Activated CD4-positive, alpha-beta memory T cell treated with anti-CD3 and anti-CD28 coated beads for 36 hours (primary cell): ENCODE measurements at regions of chr16 and their contacts with region 1.

Region 1: DNA sequence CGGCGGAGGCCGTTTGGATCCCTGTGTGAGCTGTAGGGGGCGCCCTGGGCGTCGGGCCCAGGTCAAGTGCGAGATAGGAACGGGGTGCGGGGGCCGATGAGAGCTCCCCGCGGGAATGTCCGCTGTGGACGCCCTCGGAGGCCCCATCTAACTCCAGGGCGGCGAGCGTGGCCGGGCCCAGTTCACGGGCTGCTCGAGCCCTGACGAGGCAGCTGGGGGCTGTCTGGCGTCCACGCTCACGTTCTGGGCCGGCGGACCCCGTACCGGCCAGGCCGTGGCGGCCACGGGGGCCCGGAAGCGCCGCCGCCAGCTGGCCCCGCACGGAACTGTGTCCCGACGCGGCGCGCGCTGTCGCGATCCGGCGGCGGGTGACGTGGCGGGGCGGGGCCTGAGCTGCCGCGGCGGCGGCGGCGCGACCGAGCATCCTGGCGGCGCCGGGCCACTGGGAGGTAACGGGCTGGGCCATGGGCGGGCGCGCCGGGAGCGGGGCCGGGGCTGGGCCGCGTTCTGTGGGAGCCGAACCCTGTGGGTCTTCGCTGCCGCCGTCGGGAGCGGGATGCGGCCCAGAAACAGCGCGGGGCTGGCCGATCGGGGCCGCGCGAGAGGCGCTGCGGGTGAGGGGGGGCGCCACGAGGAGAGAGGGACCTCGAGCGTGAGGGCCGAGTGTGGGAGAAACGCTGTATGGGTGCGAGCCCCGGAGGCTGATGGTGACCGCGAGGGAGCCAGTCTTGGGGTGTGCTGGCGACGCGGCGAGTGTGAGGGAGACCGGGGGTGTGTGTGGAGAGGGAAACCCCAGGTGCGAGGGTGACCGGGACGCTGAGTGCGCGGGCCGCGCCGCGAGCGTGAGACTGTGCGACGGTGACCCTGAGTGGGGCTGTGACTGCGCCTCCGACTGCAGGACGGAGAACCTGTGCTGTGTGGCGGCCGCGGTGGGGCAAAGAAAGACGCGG is at the start of gene SLC7A6:
- DNase-seq: peak; percentile 92
- H3K4me3 Mint-ChIP-seq: peak within 1 kb of the TSS; percentile 96
- H3K27ac Mint-ChIP-seq: peak within 1 kb of the TSS; percentile 95
- H3K4me1 Mint-ChIP-seq: peaks cover 43% of the 10 kb centered on the region
- H3K27me3 Mint-ChIP-seq: no peaks in the 10 kb centered on the region
- total RNA-seq, gene SLC7A6: 62.8 to 63.8 TPM

Region 2: DNA sequence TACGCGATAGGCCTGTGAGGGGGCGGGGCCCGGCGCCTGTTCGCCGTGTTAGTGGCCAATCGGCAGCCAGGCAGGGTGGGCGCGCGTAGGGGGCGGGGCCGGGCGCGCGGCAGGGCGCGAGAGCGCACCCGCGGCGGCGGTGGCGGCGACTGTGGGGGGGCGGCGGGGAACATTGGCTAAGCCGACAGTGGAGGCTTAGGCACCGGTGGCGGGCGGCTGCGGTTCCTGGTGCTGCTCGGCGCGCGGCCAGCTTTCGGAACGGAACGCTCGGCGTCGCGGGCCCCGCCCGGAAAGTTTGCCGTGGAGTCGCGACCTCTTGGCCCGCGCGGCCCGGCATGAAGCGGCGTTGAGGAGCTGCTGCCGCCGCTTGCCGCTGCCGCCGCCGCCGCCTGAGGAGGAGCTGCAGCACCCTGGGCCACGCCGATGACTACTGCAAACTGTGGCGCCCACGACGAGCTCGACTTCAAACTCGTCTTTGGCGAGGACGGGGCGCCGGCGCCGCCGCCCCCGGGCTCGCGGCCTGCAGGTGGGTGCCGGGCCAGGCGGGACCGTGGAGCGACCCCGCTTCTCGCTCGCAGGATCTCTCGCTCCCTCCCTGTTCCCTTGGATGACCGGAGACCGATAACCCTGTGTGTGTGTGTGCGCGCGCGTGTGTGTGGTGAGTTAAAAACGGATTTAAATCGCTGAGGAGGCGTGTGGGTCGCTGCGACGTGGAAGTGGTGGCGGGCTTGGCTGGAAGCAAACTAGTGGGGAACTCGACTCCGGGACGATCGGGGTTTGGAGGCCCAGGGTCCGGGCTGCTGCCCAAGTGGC is 178.9 kb before region 1 on chr16 and contains the start of gene NFATC3:
- CTCF ChIA-PET with region 1: interaction called, 6 read pairs
- POLR2A ChIA-PET with region 1: interaction called, 10 read pairs
- intact Hi-C with region 1: no loop called
- DNase-seq: peak; percentile 99
- H3K4me3 Mint-ChIP-seq: peak within 1 kb of the TSS; percentile 86
- H3K27ac Mint-ChIP-seq: peak within 1 kb of the TSS; percentile 98
- H3K4me1 Mint-ChIP-seq: peaks cover 62% of the 10 kb centered on the region
- H3K27me3 Mint-ChIP-seq: no peaks in the 10 kb centered on the region
- total RNA-seq, gene NFATC3: 83.4 to 85.2 TPM

Region 3: DNA sequence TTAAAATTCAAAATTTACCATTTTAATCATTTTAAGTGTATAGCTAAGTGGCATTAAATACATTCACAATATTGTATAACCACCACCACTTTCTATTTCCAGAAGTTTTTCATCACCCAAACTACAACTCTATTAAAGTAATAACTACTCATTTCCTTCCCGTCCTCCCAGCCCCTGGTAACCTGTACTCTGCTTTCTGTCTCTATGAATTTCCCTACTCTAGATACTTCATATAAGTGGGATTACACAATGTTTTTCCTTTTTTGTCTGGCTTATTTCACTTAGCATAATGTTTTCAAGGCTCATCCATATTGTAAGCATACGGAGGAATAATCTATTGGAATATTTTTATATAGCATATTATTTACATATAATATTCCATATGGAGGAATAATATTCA is 58.2 kb before region 1 on chr16:
- CTCF ChIA-PET with region 1: no interaction called
- POLR2A ChIA-PET with region 1: no interaction called
- intact Hi-C with region 1: no loop called
- DNase-seq: no peak
- H3K4me3 Mint-ChIP-seq: no peak overlapping the region
- H3K27ac Mint-ChIP-seq: no peak overlapping the region
- H3K4me1 Mint-ChIP-seq: peaks cover 26% of the 10 kb centered on the region
- H3K27me3 Mint-ChIP-seq: no peaks in the 10 kb centered on the region

Region 4: DNA sequence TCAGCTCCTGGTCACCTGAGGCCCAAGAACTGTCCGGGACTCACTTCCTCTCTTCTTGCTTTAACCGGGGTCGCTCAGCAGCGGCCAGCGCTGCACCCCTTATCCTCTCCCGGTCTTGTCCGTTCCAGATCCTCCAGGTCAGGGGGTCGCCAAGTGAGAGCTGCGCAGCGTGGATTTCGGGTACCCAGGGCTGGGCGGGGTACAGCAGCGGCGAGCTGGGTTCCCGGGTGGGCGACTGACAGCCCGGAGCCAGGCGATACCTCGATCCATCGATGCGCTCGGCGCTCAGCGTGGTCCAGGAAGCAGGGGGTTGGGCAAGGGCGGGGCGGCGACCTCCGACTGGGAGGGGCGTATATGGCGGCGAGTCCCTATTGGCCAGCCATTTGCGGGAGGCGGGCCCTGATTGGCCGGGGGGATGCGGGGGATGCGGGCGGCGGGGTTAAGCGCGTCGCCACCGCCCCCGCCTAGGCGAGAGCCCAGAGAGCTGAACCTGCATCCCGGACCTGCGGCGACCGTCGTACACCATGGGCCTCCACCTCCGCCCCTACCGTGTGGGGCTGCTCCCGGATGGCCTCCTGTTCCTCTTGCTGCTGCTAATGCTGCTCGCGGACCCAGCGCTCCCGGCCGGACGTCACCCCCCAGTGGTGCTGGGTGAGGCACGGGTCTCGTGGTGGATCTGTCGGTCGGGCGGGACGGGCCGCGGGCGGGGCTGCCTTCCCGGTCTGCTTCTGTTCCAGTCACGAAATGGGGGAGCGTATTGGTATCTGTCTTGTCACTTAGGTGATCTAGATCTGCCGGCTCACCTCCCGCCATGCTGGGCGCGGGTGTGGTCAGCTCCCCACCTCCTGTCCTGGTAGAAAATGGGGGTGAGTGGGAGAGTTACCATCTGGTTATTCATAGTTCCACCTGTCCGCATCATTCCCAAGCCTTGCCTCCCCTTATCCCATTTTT is 19.2 kb before region 1 on chr16 and contains the start of gene PLA2G15:
- CTCF ChIA-PET with region 1: interaction called, 27 read pairs
- POLR2A ChIA-PET with region 1: interaction called, 9 read pairs
- intact Hi-C with region 1: no loop called
- DNase-seq: peak; percentile 98
- H3K4me3 Mint-ChIP-seq: peak within 1 kb of the TSS; percentile 89
- H3K27ac Mint-ChIP-seq: peak within 1 kb of the TSS; percentile 34
- H3K4me1 Mint-ChIP-seq: peaks cover 25% of the 10 kb centered on the region
- H3K27me3 Mint-ChIP-seq: no peaks in the 10 kb centered on the region
- total RNA-seq, gene PLA2G15: 8.0 to 8.7 TPM

Region 5: DNA sequence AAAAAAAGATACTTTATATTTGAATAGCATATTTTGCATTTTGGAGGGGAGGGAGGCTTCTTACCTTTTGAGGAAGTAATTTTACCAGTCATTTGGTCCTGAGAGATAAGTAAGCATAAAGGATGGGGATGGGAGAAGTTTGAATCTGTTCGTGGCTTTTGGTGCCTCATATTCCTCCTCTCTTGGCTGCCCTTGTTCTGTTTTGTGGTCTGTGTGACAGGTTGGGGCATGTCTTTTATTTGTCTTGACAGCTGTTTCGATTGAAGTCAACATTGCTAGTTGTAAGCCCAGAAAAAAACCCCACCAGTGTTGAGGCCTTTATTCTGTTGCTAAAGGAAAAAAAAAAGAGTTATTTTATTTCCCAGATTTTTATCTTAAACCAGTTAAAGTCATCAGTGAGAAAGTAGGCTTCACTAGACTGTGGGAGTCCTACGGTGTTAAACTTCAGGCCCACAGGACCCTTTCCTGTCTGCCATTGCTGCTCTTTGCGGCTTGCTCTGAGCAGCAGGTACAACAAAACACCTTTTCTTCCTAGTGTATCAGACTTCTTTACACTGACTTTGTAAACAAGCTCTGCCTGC is 11.3 kb after region 1 on chr16:
- CTCF ChIA-PET with region 1: interaction called, 58 read pairs
- POLR2A ChIA-PET with region 1: interaction called, 8 read pairs
- intact Hi-C with region 1: loop called (anchors 1 kb)
- DNase-seq: peak; percentile 66
- H3K4me3 Mint-ChIP-seq: no peak overlapping the region
- H3K27ac Mint-ChIP-seq: peak overlapping the region; percentile 93
- H3K4me1 Mint-ChIP-seq: peaks cover 67% of the 10 kb centered on the region
- H3K27me3 Mint-ChIP-seq: no peaks in the 10 kb centered on the region

Region 6: DNA sequence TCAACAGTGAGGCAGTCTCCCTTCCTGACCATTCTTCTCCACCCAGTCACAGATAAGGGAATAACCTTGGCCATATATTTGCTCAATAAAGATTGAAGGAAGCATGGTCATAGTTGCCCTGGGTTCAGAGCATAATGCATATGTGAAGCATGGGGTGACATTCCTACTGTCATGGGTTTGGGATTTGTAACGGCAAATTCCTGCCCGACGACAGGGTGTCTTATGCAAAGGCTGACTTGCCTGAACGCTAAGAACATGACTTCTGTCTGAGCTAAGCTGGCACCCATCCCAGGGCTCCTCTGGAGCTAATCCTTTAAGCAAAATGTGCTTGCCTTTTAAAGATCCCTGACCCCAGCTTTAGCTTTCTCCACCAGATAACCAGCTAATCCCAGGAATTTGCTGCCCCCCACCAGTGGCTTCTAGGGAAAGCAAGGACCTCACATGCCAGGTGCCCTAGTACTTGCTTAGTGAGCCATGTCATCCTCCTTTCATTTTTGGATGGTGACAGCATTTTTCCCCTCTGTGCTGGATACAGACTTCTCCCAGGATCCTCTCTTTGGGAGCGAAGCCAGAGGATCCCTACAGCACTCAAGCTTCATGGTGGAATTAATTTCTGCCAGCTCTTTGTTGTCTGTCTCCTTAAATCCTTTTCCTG is 34.6 kb after region 1 on chr16:
- CTCF ChIA-PET with region 1: interaction called, 237 read pairs
- POLR2A ChIA-PET with region 1: interaction called, 4 read pairs
- intact Hi-C with region 1: no loop called
- DNase-seq: no peak
- H3K4me3 Mint-ChIP-seq: no peak overlapping the region
- H3K27ac Mint-ChIP-seq: peak overlapping the region; percentile 47
- H3K4me1 Mint-ChIP-seq: peaks cover 12% of the 10 kb centered on the region
- H3K27me3 Mint-ChIP-seq: no peaks in the 10 kb centered on the region

Region 7: GRCh38 chr16:68328151-68328859 is 63.9 kb after region 1 on chr16:
- CTCF ChIA-PET with region 1: interaction called, 571 read pairs
- POLR2A ChIA-PET with region 1: interaction called, 19 read pairs
- intact Hi-C with region 1: loop called (anchors 1 kb)
- DNase-seq: peak; percentile 86
- H3K4me3 Mint-ChIP-seq: no peak overlapping the region
- H3K27ac Mint-ChIP-seq: no peak overlapping the region
- H3K4me1 Mint-ChIP-seq: peaks cover 19% of the 10 kb centered on the region
- H3K27me3 Mint-ChIP-seq: no peaks in the 10 kb centered on the region

Region 8: GRCh38 chr16:68356249-68356918 is 92.0 kb after region 1 on chr16:
- CTCF ChIA-PET with region 1: interaction called, 11 read pairs
- POLR2A ChIA-PET with region 1: no interaction called
- intact Hi-C with region 1: loop called (anchors 1 kb)
- DNase-seq: peak; percentile 85
- H3K4me3 Mint-ChIP-seq: no peak overlapping the region
- H3K27ac Mint-ChIP-seq: no peak overlapping the region
- H3K4me1 Mint-ChIP-seq: peaks cover 28% of the 10 kb centered on the region
- H3K27me3 Mint-ChIP-seq: no peaks in the 10 kb centered on the region